ENCODE measurements at regions of chr17 and their contacts with region 1.

Region 1: GRCh38 chr17:44324571-44325275 is at the start of gene SLC25A39:
- DNase-seq: peak; percentile 96
- ATAC-seq: peak; percentile 87 to 92 (median 88)
- H3K4me3 ChIP-seq: peak within 1 kb of the TSS; percentile 89 to 100 (median 97)
- H3K27ac ChIP-seq: peak within 1 kb of the TSS; percentile 70 to 86 (median 76)
- H3K4me1 ChIP-seq: peaks cover 0 to 12% (median 5%) of the 10 kb centered on the region in 4 donors
- H3K27me3 ChIP-seq: no peaks in the 10 kb centered on the region
- CTCF ChIP-seq: no peak
- POLR2A ChIP-seq: peak; percentile 84
- total RNA-seq, gene SLC25A39: 56.3 to 111 (median 64.6) TPM

Region 2: DNA sequence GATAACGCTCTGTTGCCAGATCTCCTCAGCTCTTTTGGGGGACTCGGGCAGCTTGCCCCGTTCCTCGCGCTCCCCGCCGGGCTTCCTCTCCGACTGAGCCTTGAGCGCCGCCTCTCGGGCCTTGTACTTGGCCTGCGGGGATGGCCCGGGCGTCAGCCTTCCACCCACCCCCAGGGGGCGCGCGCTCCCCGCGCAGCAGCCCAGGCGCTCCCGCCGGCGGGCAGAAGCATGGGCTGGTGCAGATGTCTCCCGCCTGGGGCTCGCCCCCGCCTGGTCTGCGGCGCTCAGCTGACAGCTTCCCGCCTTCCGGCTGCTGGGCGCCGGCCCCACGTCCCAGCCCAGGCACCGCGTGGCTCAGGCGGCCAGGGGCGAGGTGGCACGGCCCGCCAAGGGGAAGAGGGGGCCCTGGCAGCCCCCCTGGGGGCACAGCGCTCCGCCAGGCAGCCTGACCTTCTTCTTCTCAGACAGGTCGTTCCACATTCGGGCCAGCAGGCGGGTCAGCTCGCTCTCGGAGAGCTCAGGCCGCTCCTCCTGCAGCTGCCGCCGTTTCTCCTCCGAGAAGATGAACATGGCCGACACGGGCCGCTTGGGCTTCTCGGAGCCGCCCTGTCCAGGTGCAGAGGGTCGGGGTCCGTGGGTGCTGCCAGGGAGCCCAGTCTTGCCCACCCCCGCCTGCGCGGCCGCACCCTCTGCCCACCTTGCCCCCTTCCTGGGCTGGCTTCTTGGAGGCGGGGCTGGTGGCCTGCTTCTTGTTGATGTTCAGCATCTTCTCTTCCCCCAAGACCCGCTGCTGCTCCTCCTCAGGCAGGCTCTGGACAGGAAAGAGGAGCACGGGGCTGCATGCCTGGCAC is 114.2 kb before region 1 on chr17:
- intact Hi-C with region 1: loop called (anchors 5 kb)
- DNase-seq: peak; percentile 89 to 91 (median 90)
- ATAC-seq: peak; percentile 92 to 99 (median 94)
- H3K4me3 ChIP-seq: no peak overlapping the region
- H3K27ac ChIP-seq: no peak overlapping the region
- H3K4me1 ChIP-seq: peaks cover 0 to 7% (median 0%) of the 10 kb centered on the region in 4 donors
- H3K27me3 ChIP-seq: no peaks in the 10 kb centered on the region
- CTCF ChIP-seq: peak; percentile 98 to 99 (median 98)
- POLR2A ChIP-seq: no peak

Region 3: GRCh38 chr17:44487170-44487569 is 162.4 kb after region 1 on chr17:
- intact Hi-C with region 1: no loop called
- DNase-seq: no peak
- ATAC-seq: no peak
- H3K4me3 ChIP-seq: no peak overlapping the region
- H3K27ac ChIP-seq: no peak overlapping the region
- H3K4me1 ChIP-seq: no peaks in the 10 kb centered on the region
- H3K27me3 ChIP-seq: no peaks in the 10 kb centered on the region
- CTCF ChIP-seq: no peak
- POLR2A ChIP-seq: no peak

Measured in right lobe of liver (tissue), 6 donors.